ENCODE measurements at regions of chr22 and their contacts with region 1.

Region 1: GRCh38 chr22:33209930-33210784 is 152.0 kb upstream of the SYN3 start:
- DNase-seq: peak in 2 of 9 donors; percentile 0 to 1
- ATAC-seq: no peak
- H3K4me3 ChIP-seq: no peak overlapping the region
- H3K4me3 Mint-ChIP-seq: no peak overlapping the region
- H3K27ac ChIP-seq: no peak overlapping the region
- H3K27ac Mint-ChIP-seq: no peak overlapping the region
- H3K4me1 ChIP-seq: no peaks in the 10 kb centered on the region
- H3K4me1 Mint-ChIP-seq: no peaks in the 10 kb centered on the region
- H3K27me3 ChIP-seq: peaks cover 0 to 7% of the 10 kb centered on the region in 2 donors
- H3K27me3 Mint-ChIP-seq: peaks cover 2 to 56% (median 19%) of the 10 kb centered on the region in 5 donors

Region 2: DNA sequence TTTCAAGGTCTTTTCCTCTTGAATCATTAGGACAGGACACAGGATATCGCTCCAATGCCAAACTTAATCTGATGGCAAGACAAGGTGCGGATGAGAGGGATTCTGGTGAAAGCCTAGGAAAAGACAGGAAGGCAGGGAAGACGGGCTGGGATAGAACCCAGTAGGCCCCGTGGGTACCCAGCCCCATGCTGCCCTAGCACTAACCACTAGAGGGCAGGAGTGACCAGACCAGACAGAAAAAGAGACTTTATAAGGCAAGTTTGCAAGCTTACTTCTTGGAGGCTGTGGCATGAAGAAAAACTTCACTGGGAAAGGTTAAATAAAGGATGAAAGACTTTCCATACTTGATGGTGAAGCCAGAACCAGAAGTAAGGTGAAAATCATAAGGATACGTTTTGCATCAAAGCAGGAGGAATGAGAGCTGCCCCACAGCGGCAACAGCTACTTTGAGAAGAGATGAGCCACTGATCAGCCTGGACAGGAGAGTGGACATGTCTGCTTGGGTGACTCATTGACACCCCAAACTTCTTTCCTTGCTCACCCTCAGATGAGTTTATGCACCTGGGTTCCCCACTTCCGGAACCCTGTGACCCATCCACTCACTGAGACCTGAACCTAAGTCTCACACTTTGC is 191.8 kb before region 1 on chr22:
- CTCF ChIA-PET with region 1: no interaction called
- POLR2A ChIA-PET with region 1: no interaction called
- intact Hi-C with region 1: loop called in 1 of 2 experiments (anchors 2 kb)
- DNase-seq: peak in 6 of 9 donors; percentile 5 to 31 (median 16)
- ATAC-seq: peak; percentile 57
- H3K4me3 ChIP-seq: no peak overlapping the region
- H3K4me3 Mint-ChIP-seq: no peak overlapping the region
- H3K27ac ChIP-seq: no peak overlapping the region
- H3K27ac Mint-ChIP-seq: no peak overlapping the region
- H3K4me1 ChIP-seq: no peaks in the 10 kb centered on the region
- H3K4me1 Mint-ChIP-seq: peaks cover 0 to 9% (median 0%) of the 10 kb centered on the region in 7 donors
- H3K27me3 ChIP-seq: no peaks in the 10 kb centered on the region
- H3K27me3 Mint-ChIP-seq: peaks cover 0 to 3% (median 0%) of the 10 kb centered on the region in 5 donors

Region 3: GRCh38 chr22:33194529-33195077 is 15.6 kb before region 1 on chr22:
- CTCF ChIA-PET with region 1: no interaction called
- POLR2A ChIA-PET with region 1: no interaction called
- intact Hi-C with region 1: no loop called
- DNase-seq: no peak
- ATAC-seq: no peak
- H3K4me3 ChIP-seq: no peak overlapping the region
- H3K4me3 Mint-ChIP-seq: no peak overlapping the region
- H3K27ac ChIP-seq: no peak overlapping the region
- H3K27ac Mint-ChIP-seq: no peak overlapping the region
- H3K4me1 ChIP-seq: no peaks in the 10 kb centered on the region
- H3K4me1 Mint-ChIP-seq: peaks cover 0 to 2% (median 0%) of the 10 kb centered on the region in 7 donors
- H3K27me3 ChIP-seq: no peaks in the 10 kb centered on the region
- H3K27me3 Mint-ChIP-seq: peaks cover 4 to 33% (median 14%) of the 10 kb centered on the region in 5 donors

Region 4: DNA sequence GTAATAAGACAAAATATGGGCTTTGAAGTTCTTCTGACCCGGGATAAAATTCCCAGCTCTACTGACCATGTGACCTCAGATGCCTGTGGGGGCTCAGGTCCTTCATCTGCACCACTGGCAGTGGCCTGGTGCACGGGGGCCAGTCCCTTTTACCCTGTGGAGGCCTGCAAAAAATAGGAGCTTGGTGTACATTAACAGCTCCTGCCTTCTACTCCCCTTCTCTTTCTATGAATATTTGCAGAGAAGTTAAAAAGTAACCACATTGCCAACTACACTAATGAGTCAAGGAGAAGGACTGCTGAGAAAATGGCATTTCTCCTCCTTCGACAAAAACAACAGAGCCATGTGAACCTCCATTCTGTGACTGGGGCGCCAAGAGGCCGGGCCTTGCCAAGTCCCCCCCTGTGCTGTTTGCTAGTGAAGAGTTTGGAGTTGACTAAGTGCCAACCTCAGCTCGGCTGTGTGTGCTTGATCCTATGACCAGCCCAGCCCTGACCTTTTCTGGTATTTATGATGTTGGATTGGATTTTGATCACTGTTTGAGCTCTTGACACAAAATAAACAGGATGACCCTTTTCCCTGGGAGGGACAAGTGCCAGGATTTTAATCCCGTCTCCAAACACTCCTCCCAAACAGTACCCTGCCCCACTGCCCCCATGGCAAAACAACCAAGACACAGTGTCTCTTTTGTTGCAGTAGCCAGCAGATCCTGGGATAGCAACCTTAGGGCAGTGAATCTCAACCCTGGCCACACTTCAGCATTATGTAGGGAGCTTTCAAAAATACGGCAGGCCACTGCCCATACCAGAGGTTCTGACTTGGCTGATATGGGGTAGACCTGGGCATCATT is 330.0 kb after region 1 on chr22:
- CTCF ChIA-PET with region 1: no interaction called
- POLR2A ChIA-PET with region 1: no interaction called
- intact Hi-C with region 1: no loop called
- DNase-seq: no peak
- ATAC-seq: no peak
- H3K4me3 ChIP-seq: no peak overlapping the region
- H3K4me3 Mint-ChIP-seq: no peak overlapping the region
- H3K27ac ChIP-seq: no peak overlapping the region
- H3K27ac Mint-ChIP-seq: no peak overlapping the region
- H3K4me1 ChIP-seq: no peaks in the 10 kb centered on the region
- H3K4me1 Mint-ChIP-seq: no peaks in the 10 kb centered on the region
- H3K27me3 ChIP-seq: no peaks in the 10 kb centered on the region
- H3K27me3 Mint-ChIP-seq: no peaks in the 10 kb centered on the region

Measured in naive thymus-derived CD4-positive, alpha-beta T cell (primary cell).